Posterior vena cava (tissue), 2 donors: ENCODE measurements at regions of chr17 and their contacts with region 1.

Region 1: GRCh38 chr17:11980813-11981212 is 16.5 kb downstream of the ZNF18 start:
- DNase-seq: no peak

Region 2: GRCh38 chr17:10939366-10939765 is 1041.4 kb before region 1 on chr17:
- intact Hi-C with region 1: loop called in 1 of 2 experiments (anchors 5 kb)
- DNase-seq: no peak

Region 3: GRCh38 chr17:11943759-11944347 is 37.0 kb before region 1 on chr17:
- intact Hi-C with region 1: loop called in 1 of 2 experiments (anchors 2 kb)
- DNase-seq: no peak

Region 4: GRCh38 chr17:12193144-12193735 is 212.4 kb after region 1 on chr17:
- intact Hi-C with region 1: no loop called
- DNase-seq: no peak

Region 5: GRCh38 chr17:12342609-12343435 is 362.0 kb after region 1 on chr17:
- intact Hi-C with region 1: no loop called
- DNase-seq: no peak